ENCODE measurements at regions of chr5 and their contacts with region 1.

Region 1: GRCh38 chr5:150458819-150459557 is 9.4 kb upstream of the RPS14 start:
- DNase-seq: peak; percentile 72 to 92 (median 85)
- ATAC-seq: peak; percentile 99
- H3K4me3 ChIP-seq: no peak overlapping the region
- H3K4me3 Mint-ChIP-seq: peak overlapping the region in 9 of 10 donors; percentile 4 to 70 (median 60)
- H3K27ac ChIP-seq: peak overlapping the region; percentile 23
- H3K27ac Mint-ChIP-seq: peak overlapping the region; percentile 40 to 91 (median 77)
- H3K4me1 ChIP-seq: peaks cover 0 to 30% of the 10 kb centered on the region in 2 donors
- H3K4me1 Mint-ChIP-seq: peaks cover 17 to 50% (median 42%) of the 10 kb centered on the region in 7 donors
- H3K27me3 ChIP-seq: no peaks in the 10 kb centered on the region
- H3K27me3 Mint-ChIP-seq: no peaks in the 10 kb centered on the region

Region 2: DNA sequence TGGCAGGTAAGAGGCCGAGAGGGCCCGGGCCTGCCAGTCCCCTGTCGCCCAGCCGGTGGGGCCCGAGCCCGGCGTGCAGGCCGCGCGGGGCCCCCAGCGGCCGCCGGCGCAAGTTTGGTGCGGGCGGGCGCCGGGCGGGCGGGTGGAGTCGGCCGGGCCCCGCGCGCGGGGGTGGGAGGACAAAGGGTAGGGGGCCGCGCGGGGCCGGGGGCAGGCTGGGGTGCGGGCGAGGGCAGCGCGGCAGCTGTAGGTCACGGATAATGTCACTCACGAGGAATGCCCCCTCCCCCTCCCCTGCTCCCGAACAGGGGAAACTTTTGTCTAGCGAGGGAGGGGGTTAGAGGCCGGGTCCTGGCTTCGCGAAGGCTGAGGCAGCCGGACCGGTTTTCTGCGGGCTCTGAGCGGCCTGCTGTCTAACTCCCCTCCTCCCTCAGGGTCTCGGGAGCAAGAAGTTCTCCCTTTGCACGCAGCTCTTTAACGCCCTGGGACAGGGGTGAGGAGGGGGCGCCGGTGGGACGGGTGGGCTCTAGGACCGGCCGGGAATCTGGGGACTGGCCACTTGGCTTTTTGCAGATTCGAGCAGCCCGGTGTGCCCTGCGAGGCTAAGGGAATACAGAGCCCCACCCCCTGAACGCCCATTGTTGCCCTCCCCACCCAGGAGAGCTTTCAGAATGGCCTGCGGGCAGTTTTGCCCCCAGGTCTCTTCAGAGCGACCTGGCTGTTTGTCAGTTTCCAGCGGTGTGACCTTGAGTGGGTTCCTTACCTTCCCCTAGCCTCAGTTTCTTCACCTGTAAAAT is 27.6 kb after region 1 on chr5:
- CTCF ChIA-PET with region 1: no interaction called
- POLR2A ChIA-PET with region 1: no interaction called
- intact Hi-C with region 1: loop called in 1 of 2 experiments (anchors 2 kb)
- DNase-seq: peak; percentile 23 to 67 (median 59)
- ATAC-seq: peak; percentile 46
- H3K4me3 ChIP-seq: peak overlapping the region; percentile 48
- H3K4me3 Mint-ChIP-seq: peak overlapping the region; percentile 55 to 79 (median 73)
- H3K27ac ChIP-seq: peak overlapping the region; percentile 33
- H3K27ac Mint-ChIP-seq: peak overlapping the region in 8 of 9 donors; percentile 16 to 84 (median 62)
- H3K4me1 ChIP-seq: peaks cover 3 to 5% of the 10 kb centered on the region in 2 donors
- H3K4me1 Mint-ChIP-seq: peaks cover 7 to 25% (median 15%) of the 10 kb centered on the region in 7 donors
- H3K27me3 ChIP-seq: no peaks in the 10 kb centered on the region
- H3K27me3 Mint-ChIP-seq: peaks cover 0 to 36% (median 4%) of the 10 kb centered on the region in 5 donors

Region 3: GRCh38 chr5:150544611-150545219 is 85.7 kb after region 1 on chr5:
- CTCF ChIA-PET with region 1: no interaction called
- POLR2A ChIA-PET with region 1: no interaction called
- intact Hi-C with region 1: loop called (anchors 1 to 2 kb)
- DNase-seq: peak in 8 of 9 donors; percentile 17 to 64 (median 31)
- ATAC-seq: peak; percentile 86
- H3K4me3 ChIP-seq: no peak overlapping the region
- H3K4me3 Mint-ChIP-seq: no peak overlapping the region
- H3K27ac ChIP-seq: no peak overlapping the region
- H3K27ac Mint-ChIP-seq: no peak overlapping the region
- H3K4me1 ChIP-seq: no peaks in the 10 kb centered on the region
- H3K4me1 Mint-ChIP-seq: no peaks in the 10 kb centered on the region
- H3K27me3 ChIP-seq: no peaks in the 10 kb centered on the region
- H3K27me3 Mint-ChIP-seq: no peaks in the 10 kb centered on the region

Region 4: DNA sequence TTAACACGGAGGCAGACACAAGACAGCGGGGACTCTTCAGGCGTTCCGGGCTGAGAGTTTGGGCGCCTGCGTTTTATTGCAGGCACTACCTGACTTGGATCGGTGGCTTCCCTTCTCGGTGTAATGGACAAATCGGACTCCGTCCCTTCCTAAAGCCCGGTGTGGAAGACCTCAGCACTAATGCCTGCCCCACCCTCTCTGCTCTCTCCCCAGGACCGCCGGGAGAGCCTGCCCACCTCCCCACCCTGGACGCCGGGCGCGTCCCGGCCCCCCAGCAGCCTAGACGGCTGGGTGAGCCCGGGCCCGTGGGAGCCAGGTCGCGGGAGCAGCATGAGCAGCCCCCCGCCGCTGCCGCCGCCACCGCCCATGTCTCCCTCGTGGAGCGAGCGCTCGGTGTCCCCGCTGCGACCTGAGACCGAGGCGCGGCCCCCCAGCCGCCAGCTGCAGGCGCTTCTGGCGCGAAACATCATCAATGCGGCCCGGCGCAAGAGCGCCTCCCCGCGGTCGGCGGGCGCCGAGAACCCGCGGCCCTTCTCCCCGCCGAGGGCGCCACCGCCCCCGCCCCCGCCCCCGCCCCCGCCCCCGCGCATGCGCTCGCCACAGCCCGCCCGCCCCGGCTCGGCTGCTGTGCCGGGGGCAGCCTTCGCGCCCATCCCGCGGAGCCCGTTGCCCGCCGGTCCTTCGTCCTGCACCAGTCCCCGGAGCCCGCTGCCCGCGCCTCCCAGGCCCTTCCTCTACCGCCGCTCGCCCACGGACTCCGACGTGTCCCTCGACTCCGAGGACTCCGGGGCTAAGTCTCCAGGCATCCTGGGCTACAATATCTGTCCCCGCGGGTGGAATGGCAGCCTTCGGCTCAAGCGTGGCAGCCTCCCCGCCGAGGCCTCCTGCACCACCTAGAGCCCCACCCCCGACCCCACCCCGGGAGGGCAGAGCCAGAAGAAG is 197.5 kb after region 1 on chr5:
- CTCF ChIA-PET with region 1: no interaction called
- POLR2A ChIA-PET with region 1: no interaction called
- intact Hi-C with region 1: loop called (anchors 1 kb)
- DNase-seq: peak; percentile 74 to 88 (median 83)
- ATAC-seq: peak; percentile 96
- H3K4me3 ChIP-seq: peak overlapping the region; percentile 75
- H3K4me3 Mint-ChIP-seq: peak overlapping the region; percentile 75 to 90 (median 84)
- H3K27ac ChIP-seq: peak overlapping the region; percentile 63
- H3K27ac Mint-ChIP-seq: peak overlapping the region in 7 of 9 donors; percentile 17 to 74 (median 54)
- H3K4me1 ChIP-seq: peaks cover 0 to 4% of the 10 kb centered on the region in 2 donors
- H3K4me1 Mint-ChIP-seq: peaks cover 0 to 12% (median 5%) of the 10 kb centered on the region in 7 donors
- H3K27me3 ChIP-seq: no peaks in the 10 kb centered on the region
- H3K27me3 Mint-ChIP-seq: peaks cover 0 to 19% (median 0%) of the 10 kb centered on the region in 5 donors

Region 5: GRCh38 chr5:150789943-150790611 is 331.1 kb after region 1 on chr5:
- CTCF ChIA-PET with region 1: no interaction called
- POLR2A ChIA-PET with region 1: no interaction called
- intact Hi-C with region 1: loop called in 1 of 2 experiments (anchors 5 kb)
- DNase-seq: peak in 8 of 9 donors; percentile 37 to 73 (median 63)
- ATAC-seq: peak; percentile 94
- H3K4me3 ChIP-seq: no peak overlapping the region
- H3K4me3 Mint-ChIP-seq: peak overlapping the region; percentile 46 to 77 (median 66)
- H3K27ac ChIP-seq: peak overlapping the region; percentile 19
- H3K27ac Mint-ChIP-seq: peak overlapping the region; percentile 63 to 95 (median 85)
- H3K4me1 ChIP-seq: peaks cover 0 to 15% of the 10 kb centered on the region in 2 donors
- H3K4me1 Mint-ChIP-seq: peaks cover 21 to 64% (median 56%) of the 10 kb centered on the region in 7 donors
- H3K27me3 ChIP-seq: no peaks in the 10 kb centered on the region
- H3K27me3 Mint-ChIP-seq: no peaks in the 10 kb centered on the region

Region 6: GRCh38 chr5:150846654-150847333 is 387.8 kb after region 1 on chr5:
- CTCF ChIA-PET with region 1: interaction called, 16 read pairs
- POLR2A ChIA-PET with region 1: no interaction called
- intact Hi-C with region 1: loop called (anchors 1 kb)
- DNase-seq: peak; percentile 17 to 83 (median 77)
- ATAC-seq: peak; percentile 98
- H3K4me3 ChIP-seq: peak overlapping the region; percentile 38
- H3K4me3 Mint-ChIP-seq: peak overlapping the region; percentile 65 to 93 (median 88)
- H3K27ac ChIP-seq: peak overlapping the region; percentile 52
- H3K27ac Mint-ChIP-seq: peak overlapping the region; percentile 65 to 94 (median 88)
- H3K4me1 ChIP-seq: no peaks in the 10 kb centered on the region
- H3K4me1 Mint-ChIP-seq: peaks cover 6 to 30% (median 19%) of the 10 kb centered on the region in 7 donors
- H3K27me3 ChIP-seq: no peaks in the 10 kb centered on the region
- H3K27me3 Mint-ChIP-seq: peaks cover 0 to 5% (median 0%) of the 10 kb centered on the region in 5 donors

Region 7: GRCh38 chr5:151115274-151115905 is 656.4 kb after region 1 on chr5:
- CTCF ChIA-PET with region 1: no interaction called
- POLR2A ChIA-PET with region 1: no interaction called
- intact Hi-C with region 1: loop called in 1 of 2 experiments (anchors 2 kb)
- DNase-seq: peak; percentile 49 to 72 (median 67)
- ATAC-seq: peak; percentile 95
- H3K4me3 ChIP-seq: no peak overlapping the region
- H3K4me3 Mint-ChIP-seq: no peak overlapping the region
- H3K27ac ChIP-seq: no peak overlapping the region
- H3K27ac Mint-ChIP-seq: peak overlapping the region in 2 of 9 donors; percentile 58 to 59
- H3K4me1 ChIP-seq: no peaks in the 10 kb centered on the region
- H3K4me1 Mint-ChIP-seq: peaks cover 4 to 17% (median 12%) of the 10 kb centered on the region in 7 donors
- H3K27me3 ChIP-seq: no peaks in the 10 kb centered on the region
- H3K27me3 Mint-ChIP-seq: no peaks in the 10 kb centered on the region

Measured in naive thymus-derived CD4-positive, alpha-beta T cell (primary cell).